ENCODE measurements at regions of chr1 and their contacts with region 1.

Region 1: GRCh38 chr1:15684468-15685291 is 560 bp downstream of the PLEKHM2 start:
- DNase-seq: peak; percentile 51 to 80 (median 53)
- ATAC-seq: peak in 3 of 4 donors; percentile 31 to 60 (median 37)
- H3K4me3 ChIP-seq: peak overlapping the region; percentile 72 to 100 (median 86)
- H3K27ac ChIP-seq: peak overlapping the region; percentile 87 to 98 (median 92)
- H3K4me1 ChIP-seq: peaks cover 0 to 70% (median 14%) of the 10 kb centered on the region in 12 donors
- H3K27me3 ChIP-seq: no peaks in the 10 kb centered on the region
- CTCF ChIP-seq: no peak
- POLR2A ChIP-seq: no peak

Region 2: GRCh38 chr1:15617175-15617880 is 67.4 kb before region 1 on chr1 and contains the start of gene DDI2:
- intact Hi-C with region 1: loop called in 1 of 10 experiments (anchors 5 kb)
- DNase-seq: peak; percentile 97 to 98 (median 97)
- ATAC-seq: peak; percentile 77 to 96 (median 94)
- H3K4me3 ChIP-seq: peak within 1 kb of the TSS; percentile 81 to 98 (median 92)
- H3K27ac ChIP-seq: peak within 1 kb of the TSS; percentile 82 to 99 (median 94)
- H3K4me1 ChIP-seq: peaks cover 8 to 51% (median 39%) of the 10 kb centered on the region in 12 donors
- H3K27me3 ChIP-seq: no peaks in the 10 kb centered on the region
- CTCF ChIP-seq: no peak
- POLR2A ChIP-seq: peak; percentile 51 to 94
- total RNA-seq, gene DDI2: 15.0 to 33.5 (median 24.5) TPM

Region 3: DNA sequence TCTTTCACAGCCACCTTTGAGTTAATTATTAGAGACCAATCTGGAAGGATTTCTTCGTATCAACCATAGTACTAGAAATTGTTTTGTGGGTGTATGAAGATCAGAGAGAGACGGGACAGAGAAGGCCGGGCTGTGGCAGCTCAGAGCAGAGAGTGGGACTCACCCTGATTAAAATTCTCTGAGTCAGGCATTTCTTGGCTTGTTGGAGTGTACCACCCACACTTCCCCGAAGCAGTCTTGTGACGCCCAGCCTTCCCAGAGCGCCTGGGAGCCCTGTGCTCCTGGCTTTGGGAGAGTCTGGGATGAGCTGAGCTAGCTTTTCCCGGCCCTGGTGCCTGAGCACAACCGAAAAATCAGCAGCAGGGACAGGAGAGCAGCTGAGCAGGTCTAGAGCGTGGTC is 18.9 kb after region 1 on chr1:
- intact Hi-C with region 1: loop called in 1 of 10 experiments (anchors 2 kb)
- DNase-seq: peak; percentile 77 to 88 (median 81)
- ATAC-seq: peak; percentile 73 to 94 (median 94)
- H3K4me3 ChIP-seq: peak overlapping the region in 7 of 12 donors; percentile 1 to 17 (median 8)
- H3K27ac ChIP-seq: peak overlapping the region; percentile 14 to 96 (median 86)
- H3K4me1 ChIP-seq: peaks cover 7 to 84% (median 56%) of the 10 kb centered on the region in 12 donors
- H3K27me3 ChIP-seq: no peaks in the 10 kb centered on the region
- CTCF ChIP-seq: no peak
- POLR2A ChIP-seq: no peak

Region 4: DNA sequence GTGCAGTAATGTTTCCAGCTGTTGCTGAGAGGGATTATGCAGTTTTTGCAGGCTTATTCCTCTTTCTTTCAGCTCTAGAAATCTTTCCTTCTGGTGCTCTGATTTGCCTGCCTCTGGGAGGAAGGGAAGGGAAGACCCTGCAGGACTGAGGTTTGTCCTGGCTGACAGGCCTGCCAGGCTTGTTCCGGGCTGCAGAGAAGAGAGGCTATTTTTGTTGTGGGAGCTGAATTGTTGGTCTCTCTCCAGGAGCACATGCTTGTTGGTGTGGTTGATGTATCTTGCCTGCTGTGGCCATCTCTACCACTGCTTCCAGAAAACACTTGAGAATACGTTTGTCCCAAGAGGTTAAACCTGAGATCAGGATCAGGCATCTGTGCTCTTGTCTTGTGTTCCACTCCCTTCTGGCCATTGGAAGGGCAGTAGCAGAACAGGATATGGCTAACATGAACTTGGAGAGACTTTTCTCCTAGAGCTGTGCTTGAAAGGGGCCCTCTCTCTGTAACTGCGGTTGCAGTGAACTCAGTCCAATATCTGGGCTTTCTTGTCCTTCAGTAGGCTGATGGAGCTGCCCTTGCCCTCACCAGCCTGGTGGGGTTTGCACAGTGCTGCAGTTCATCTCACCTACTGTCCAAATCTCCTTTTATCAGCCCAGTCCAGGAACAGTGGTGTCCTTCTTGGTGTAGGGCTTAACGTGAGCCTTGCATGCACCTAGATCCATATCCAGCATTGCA is 29.9 kb after region 1 on chr1:
- intact Hi-C with region 1: loop called in 1 of 10 experiments (anchors 2 kb)
- DNase-seq: peak in 4 of 5 donors; percentile 68 to 79 (median 74)
- ATAC-seq: peak; percentile 81 to 88 (median 86)
- H3K4me3 ChIP-seq: no peak overlapping the region
- H3K27ac ChIP-seq: peak overlapping the region; percentile 46 to 91 (median 80)
- H3K4me1 ChIP-seq: peaks cover 6 to 85% (median 45%) of the 10 kb centered on the region in 12 donors
- H3K27me3 ChIP-seq: no peaks in the 10 kb centered on the region
- CTCF ChIP-seq: no peak
- POLR2A ChIP-seq: no peak

Region 5: GRCh38 chr1:15736038-15736889 is 51.6 kb after region 1 on chr1 and contains the start of gene SLC25A34:
- intact Hi-C with region 1: loop called in 2 of 10 experiments (anchors 2 to 10 kb)
- DNase-seq: peak; percentile 80 to 93 (median 87)
- ATAC-seq: peak; percentile 82 to 92 (median 88)
- H3K4me3 ChIP-seq: peak within 1 kb of the TSS in 10 of 12 donors; percentile 14 to 47 (median 30)
- H3K27ac ChIP-seq: peak within 1 kb of the TSS; percentile 73 to 96 (median 84)
- H3K4me1 ChIP-seq: peaks cover 0 to 41% (median 17%) of the 10 kb centered on the region in 12 donors
- H3K27me3 ChIP-seq: no peaks in the 10 kb centered on the region
- CTCF ChIP-seq: peak in 1 of 12 donors; percentile 16
- POLR2A ChIP-seq: peak in 1 of 2 donors; percentile 48
- total RNA-seq, gene SLC25A34: 4.8 to 71.2 (median 17.8) TPM

Region 6: GRCh38 chr1:16226490-16227179 is 542.0 kb after region 1 on chr1:
- intact Hi-C with region 1: no loop called
- DNase-seq: peak; percentile 40 to 87 (median 72)
- ATAC-seq: peak; percentile 70 to 88 (median 84)
- H3K4me3 ChIP-seq: peak overlapping the region; percentile 7 to 45 (median 36)
- H3K27ac ChIP-seq: peak overlapping the region in 1 of 12 donors; percentile 6
- H3K4me1 ChIP-seq: peaks cover 0 to 16% (median 0%) of the 10 kb centered on the region in 12 donors
- H3K27me3 ChIP-seq: peaks cover 0 to 31% (median 13%) of the 10 kb centered on the region in 9 donors
- CTCF ChIP-seq: no peak
- POLR2A ChIP-seq: no peak